HepG2 (cell line): ENCODE measurements at regions of chr19 and their contacts with region 1.

Region 1: DNA sequence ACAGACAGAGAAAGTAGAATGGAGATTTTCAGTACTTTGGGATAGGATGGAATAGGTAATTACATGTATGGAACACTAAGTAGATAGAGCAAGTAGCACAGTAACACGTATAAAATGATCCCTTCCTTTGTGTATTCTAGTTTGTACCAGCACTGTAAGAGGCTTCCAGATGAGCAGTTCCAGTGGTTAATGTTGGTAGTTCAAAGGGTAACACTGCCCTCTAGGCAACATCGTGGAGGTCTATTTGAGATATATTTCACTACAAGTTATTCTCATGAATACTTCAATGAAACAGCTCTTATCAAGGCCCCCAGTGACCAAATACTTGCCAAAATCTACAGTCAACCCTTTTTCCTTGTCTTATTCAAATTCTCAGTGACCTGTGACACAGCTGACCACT is 13.5 kb upstream of the ZNF563 start:
- DNase-seq: peak; percentile 58
- ATAC-seq: peak; percentile 77
- H3K4me3 ChIP-seq: no peak overlapping the region
- H3K27ac ChIP-seq: no peak overlapping the region
- H3K4me1 ChIP-seq: no peaks in the 10 kb centered on the region
- H3K27me3 ChIP-seq: no peaks in the 10 kb centered on the region
- CTCF ChIP-seq: peak; percentile 73
- EP300 ChIP-seq: no peak
- POLR2A ChIP-seq: no peak
- RAD21 ChIP-seq: peak; percentile 56

Region 2: GRCh38 chr19:12202250-12202649 is 144.6 kb before region 1 on chr19:
- CTCF ChIA-PET with region 1: interaction called, 20 read pairs
- POLR2A ChIA-PET with region 1: no interaction called
- in situ Hi-C with region 1: loop called (anchors 5 kb)
- intact Hi-C with region 1: loop called (anchors 1 kb)
- DNase-seq: peak; percentile 56
- ATAC-seq: peak; percentile 96
- H3K4me3 ChIP-seq: no peak overlapping the region
- H3K27ac ChIP-seq: no peak overlapping the region
- H3K4me1 ChIP-seq: 0 out of 2 replicates have a peak, but pooled peaks cover 7% of the 10 kb centered on the region
- H3K27me3 ChIP-seq: no peaks in the 10 kb centered on the region
- CTCF ChIP-seq: peak; percentile 91
- EP300 ChIP-seq: no peak
- POLR2A ChIP-seq: no peak
- RAD21 ChIP-seq: peak; percentile 81

Region 3: DNA sequence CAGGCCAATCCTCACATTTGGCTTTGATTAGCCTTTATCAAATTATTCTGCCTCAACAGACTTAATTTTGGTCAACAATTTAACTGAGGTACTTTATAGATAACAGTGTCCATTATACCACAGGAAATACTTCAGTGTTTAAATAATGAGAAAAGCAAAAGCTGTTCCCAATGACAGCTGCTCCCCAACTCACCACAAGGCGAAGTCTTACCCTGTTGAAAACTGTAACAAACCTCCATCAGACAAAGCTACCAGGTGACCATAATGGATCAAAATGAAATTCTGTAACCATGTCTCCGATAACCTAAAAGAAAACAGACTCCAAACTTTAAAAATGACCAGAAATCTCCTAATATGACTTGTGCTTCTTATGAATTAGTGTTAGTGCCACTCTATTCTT is 102.5 kb before region 1 on chr19:
- CTCF ChIA-PET with region 1: interaction called, 12 read pairs
- POLR2A ChIA-PET with region 1: no interaction called
- in situ Hi-C with region 1: no loop called
- intact Hi-C with region 1: loop called (anchors 1 kb)
- DNase-seq: peak; percentile 21
- ATAC-seq: peak; percentile 57
- H3K4me3 ChIP-seq: no peak overlapping the region
- H3K27ac ChIP-seq: no peak overlapping the region
- H3K4me1 ChIP-seq: no peaks in the 10 kb centered on the region
- H3K27me3 ChIP-seq: no peaks in the 10 kb centered on the region
- CTCF ChIP-seq: peak; percentile 61
- EP300 ChIP-seq: no peak
- POLR2A ChIP-seq: no peak
- RAD21 ChIP-seq: peak; percentile 51; the same call in 1 of the 2 replicates

Region 4: GRCh38 chr19:12478234-12478941 is 131.5 kb after region 1 on chr19:
- CTCF ChIA-PET with region 1: no interaction called
- POLR2A ChIA-PET with region 1: no interaction called
- in situ Hi-C with region 1: no loop called
- intact Hi-C with region 1: no loop called
- DNase-seq: no peak
- ATAC-seq: no peak
- H3K4me3 ChIP-seq: no peak overlapping the region
- H3K27ac ChIP-seq: no peak overlapping the region
- H3K4me1 ChIP-seq: peaks cover 18% of the 10 kb centered on the region
- H3K27me3 ChIP-seq: no peaks in the 10 kb centered on the region; a peak in 1 of 5 replicates
- CTCF ChIP-seq: no peak
- EP300 ChIP-seq: no peak
- POLR2A ChIP-seq: no peak
- RAD21 ChIP-seq: no peak